ENCODE measurements at regions of chr1 and their contacts with region 1.

Region 1: GRCh38 chr1:87084244-87084836 is 169.9 kb downstream of the HS2ST1 start:
- DNase-seq: no peak
- ATAC-seq: no peak
- H3K4me3 Mint-ChIP-seq: no peak overlapping the region
- H3K27ac Mint-ChIP-seq: no peak overlapping the region
- H3K4me1 Mint-ChIP-seq: peaks cover 17% of the 10 kb centered on the region
- H3K27me3 Mint-ChIP-seq: no peaks in the 10 kb centered on the region
- CTCF ChIP-seq: peak; percentile 66

Region 2: GRCh38 chr1:86833461-86834215 is 250.7 kb before region 1 on chr1:
- CTCF ChIA-PET with region 1: interaction called, 113 read pairs
- POLR2A ChIA-PET with region 1: no interaction called
- intact Hi-C with region 1: loop called (anchors 1 kb)
- DNase-seq: peak; percentile 77
- ATAC-seq: peak; percentile 90
- H3K4me3 Mint-ChIP-seq: no peak overlapping the region
- H3K27ac Mint-ChIP-seq: no peak overlapping the region
- H3K4me1 Mint-ChIP-seq: no peaks in the 10 kb centered on the region
- H3K27me3 Mint-ChIP-seq: no peaks in the 10 kb centered on the region
- CTCF ChIP-seq: peak; percentile 47

Region 3: DNA sequence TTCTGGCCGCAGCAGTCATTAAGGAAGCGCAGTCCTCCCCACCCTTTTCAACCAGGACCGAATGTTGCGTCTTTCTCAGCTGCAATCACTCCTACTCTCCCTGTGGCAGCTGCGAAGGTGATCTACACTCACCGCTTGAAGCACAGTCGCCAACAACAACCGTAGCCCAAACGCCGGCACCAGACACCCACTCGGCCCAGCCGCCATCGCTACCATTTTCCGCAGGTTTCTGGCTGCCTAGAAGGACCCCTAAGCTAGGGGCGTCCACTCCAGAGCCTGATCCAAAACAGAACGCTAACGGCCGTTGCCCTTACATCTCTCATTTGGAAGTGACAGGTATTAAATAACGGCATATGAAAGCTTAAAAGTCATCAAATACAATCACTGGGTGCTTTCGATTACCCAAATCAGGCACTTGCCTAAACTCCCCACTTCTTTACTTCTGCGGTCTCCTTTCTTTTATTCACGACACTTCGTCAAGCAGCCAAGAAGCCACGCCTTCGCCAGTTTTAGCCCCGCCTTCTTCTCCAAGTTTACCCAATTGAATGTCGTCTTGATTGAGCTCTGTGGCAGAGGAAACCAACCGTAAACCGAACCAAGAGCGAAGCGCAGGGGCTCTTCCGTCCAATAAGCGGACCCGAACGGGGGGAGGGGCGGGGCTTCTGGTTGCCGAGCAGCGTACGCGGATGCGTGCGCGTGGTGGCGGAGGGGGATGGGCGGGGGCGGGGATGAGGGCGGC is 170.3 kb before region 1 on chr1 and contains the start of gene SELENOF:
- CTCF ChIA-PET with region 1: interaction called, 27 read pairs
- POLR2A ChIA-PET with region 1: interaction called, 7 read pairs
- intact Hi-C with region 1: loop called (anchors 10 kb)
- DNase-seq: peak; percentile 100
- ATAC-seq: peak; percentile 92
- H3K4me3 Mint-ChIP-seq: no peak within 1 kb of the TSS
- H3K27ac Mint-ChIP-seq: no peak within 1 kb of the TSS
- H3K4me1 Mint-ChIP-seq: peaks cover 42% of the 10 kb centered on the region
- H3K27me3 Mint-ChIP-seq: no peaks in the 10 kb centered on the region
- CTCF ChIP-seq: no peak
- total RNA-seq, gene SELENOF: 115 to 131 TPM

Region 4: DNA sequence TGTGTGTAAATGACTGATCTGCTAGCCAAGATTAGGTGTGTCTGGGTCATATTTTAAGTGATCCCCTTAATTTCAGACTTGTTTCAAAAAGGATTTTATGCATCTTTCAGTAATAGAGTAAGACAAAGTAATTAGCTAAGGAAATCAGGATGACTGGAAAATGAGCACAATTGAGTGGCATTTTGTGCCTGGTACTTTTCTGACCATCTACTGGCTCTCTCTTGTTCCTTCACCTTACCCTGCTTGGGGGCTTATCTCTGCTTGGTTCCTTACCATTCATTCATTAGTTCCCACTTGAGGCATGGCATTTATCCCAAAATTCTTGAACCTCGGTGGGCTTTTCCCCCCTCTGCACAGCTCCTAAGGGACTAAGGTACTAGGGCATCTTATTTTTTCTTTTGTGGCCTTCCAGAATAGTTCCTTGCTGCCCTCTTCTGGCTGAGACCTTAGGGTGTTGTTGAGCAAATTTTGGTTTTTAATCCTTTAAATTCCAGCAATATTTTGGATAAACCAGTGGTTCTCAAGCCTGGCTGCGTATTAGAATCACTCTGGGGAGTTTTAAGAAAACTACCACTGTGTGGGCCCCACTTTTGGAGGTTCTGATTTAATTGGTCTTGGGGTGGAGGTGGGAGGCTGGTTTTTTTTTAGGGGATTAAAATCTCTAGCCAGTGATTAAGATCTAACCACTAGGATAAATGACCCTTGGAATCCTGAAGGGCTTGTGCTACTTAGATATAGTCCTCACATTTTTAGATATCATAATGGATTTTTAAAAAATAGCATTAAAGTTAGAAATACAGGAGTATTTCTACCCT is 119.1 kb before region 1 on chr1:
- CTCF ChIA-PET with region 1: interaction called, 11 read pairs
- POLR2A ChIA-PET with region 1: no interaction called
- intact Hi-C with region 1: no loop called
- DNase-seq: peak; percentile 33
- ATAC-seq: no peak
- H3K4me3 Mint-ChIP-seq: no peak overlapping the region
- H3K27ac Mint-ChIP-seq: no peak overlapping the region
- H3K4me1 Mint-ChIP-seq: no peaks in the 10 kb centered on the region
- H3K27me3 Mint-ChIP-seq: no peaks in the 10 kb centered on the region
- CTCF ChIP-seq: peak; percentile 39

Region 5: GRCh38 chr1:86993269-86993985 is 90.9 kb before region 1 on chr1:
- CTCF ChIA-PET with region 1: interaction called, 4 read pairs
- POLR2A ChIA-PET with region 1: no interaction called
- intact Hi-C with region 1: loop called (anchors 10 kb)
- DNase-seq: no peak
- ATAC-seq: no peak
- H3K4me3 Mint-ChIP-seq: no peak overlapping the region
- H3K27ac Mint-ChIP-seq: no peak overlapping the region
- H3K4me1 Mint-ChIP-seq: peaks cover 16% of the 10 kb centered on the region
- H3K27me3 Mint-ChIP-seq: no peaks in the 10 kb centered on the region
- CTCF ChIP-seq: no peak

Region 6: DNA sequence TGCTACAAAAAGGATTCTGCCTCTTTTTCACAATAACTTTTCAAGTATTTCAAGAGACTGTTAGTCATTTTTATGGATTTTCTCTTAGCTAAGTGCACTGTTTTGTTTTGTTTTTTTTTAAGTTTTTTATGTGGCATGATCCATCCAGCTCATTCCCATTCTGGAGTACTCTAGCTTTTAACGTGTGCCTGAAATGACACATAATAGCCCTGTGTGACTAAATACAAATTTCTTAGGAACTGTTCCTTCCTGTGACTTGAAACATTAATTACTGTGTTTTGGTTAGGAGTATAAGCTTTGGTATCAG is 26.0 kb before region 1 on chr1:
- CTCF ChIA-PET with region 1: interaction called, 12 read pairs
- POLR2A ChIA-PET with region 1: no interaction called
- intact Hi-C with region 1: no loop called
- DNase-seq: no peak
- ATAC-seq: no peak
- H3K4me3 Mint-ChIP-seq: no peak overlapping the region
- H3K27ac Mint-ChIP-seq: no peak overlapping the region
- H3K4me1 Mint-ChIP-seq: peaks cover 25% of the 10 kb centered on the region
- H3K27me3 Mint-ChIP-seq: no peaks in the 10 kb centered on the region
- CTCF ChIP-seq: no peak

Region 7: DNA sequence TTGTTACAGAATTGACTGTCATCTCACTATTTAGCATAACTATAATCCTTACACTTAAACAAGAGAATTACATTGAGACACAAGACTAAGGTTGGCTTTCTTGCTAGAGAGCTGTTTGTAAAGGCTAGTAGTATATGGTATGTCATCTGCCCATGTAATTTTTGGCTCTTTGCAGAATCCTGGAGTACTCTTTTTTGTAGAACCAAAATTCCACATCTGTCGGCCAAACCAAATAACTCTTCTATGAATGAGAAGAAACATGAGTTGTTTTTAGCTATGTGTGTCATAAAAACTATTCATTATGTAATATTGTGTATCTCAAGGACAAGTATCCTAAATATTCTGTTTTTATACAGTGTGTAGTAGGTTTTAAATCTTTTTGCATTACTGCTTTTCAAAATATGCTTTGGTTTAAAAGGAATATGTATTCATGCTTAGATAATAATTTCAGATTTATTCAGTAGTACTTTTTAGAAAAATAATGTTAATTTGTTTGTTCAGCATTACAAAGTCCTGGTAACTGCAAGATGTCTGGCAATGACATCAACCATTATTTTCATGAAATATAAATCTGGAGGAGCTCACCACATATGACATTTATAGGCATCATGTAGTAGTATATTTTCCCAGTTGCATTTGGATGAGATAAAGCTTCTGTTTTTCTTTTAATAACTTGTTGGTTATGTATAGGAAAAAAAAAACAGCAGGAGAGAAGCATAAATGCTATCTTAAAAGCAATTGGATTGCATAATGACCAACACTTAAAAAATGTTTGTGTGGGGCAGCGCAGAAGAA is 10.1 kb before region 1 on chr1:
- CTCF ChIA-PET with region 1: interaction called, 30 read pairs
- POLR2A ChIA-PET with region 1: no interaction called
- intact Hi-C with region 1: no loop called
- DNase-seq: no peak
- ATAC-seq: no peak
- H3K4me3 Mint-ChIP-seq: no peak overlapping the region
- H3K27ac Mint-ChIP-seq: no peak overlapping the region
- H3K4me1 Mint-ChIP-seq: peaks cover 2% of the 10 kb centered on the region
- H3K27me3 Mint-ChIP-seq: no peaks in the 10 kb centered on the region
- CTCF ChIP-seq: no peak

Region 8: GRCh38 chr1:88141499-88142074 is 1057.2 kb after region 1 on chr1:
- CTCF ChIA-PET with region 1: no interaction called
- POLR2A ChIA-PET with region 1: no interaction called
- intact Hi-C with region 1: no loop called
- DNase-seq: no peak
- ATAC-seq: no peak
- H3K4me3 Mint-ChIP-seq: no peak overlapping the region
- H3K27ac Mint-ChIP-seq: no peak overlapping the region
- H3K4me1 Mint-ChIP-seq: no peaks in the 10 kb centered on the region
- H3K27me3 Mint-ChIP-seq: peaks cover 9% of the 10 kb centered on the region
- CTCF ChIP-seq: no peak